ENCODE measurements at regions of chr10 and their contacts with region 1.

Region 1: GRCh38 chr10:71383972-71384687 is 12.6 kb upstream of the CDH23 start:
- DNase-seq: peak; percentile 44
- ATAC-seq: peak; percentile 98
- H3K4me3 ChIP-seq: no peak overlapping the region
- H3K27ac ChIP-seq: no peak overlapping the region
- H3K4me1 ChIP-seq: peaks cover 16% of the 10 kb centered on the region
- H3K27me3 ChIP-seq: peaks cover 0 to 3% of the 10 kb centered on the region in 2 experiments; a peak in 3 of 5 replicates
- CTCF ChIP-seq: peak; percentile 91
- EP300 ChIP-seq: no peak
- POLR2A ChIP-seq: no peak
- RAD21 ChIP-seq: peak; percentile 85

Region 2: GRCh38 chr10:71191531-71192076 is 192.5 kb before region 1 on chr10:
- CTCF ChIA-PET with region 1: no interaction called
- POLR2A ChIA-PET with region 1: no interaction called
- in situ Hi-C with region 1: no loop called
- intact Hi-C with region 1: no loop called
- DNase-seq: no peak
- ATAC-seq: no peak
- H3K4me3 ChIP-seq: no peak overlapping the region
- H3K27ac ChIP-seq: no peak overlapping the region
- H3K4me1 ChIP-seq: no peaks in the 10 kb centered on the region
- H3K27me3 ChIP-seq: peaks cover 4% of the 10 kb centered on the region in 2 experiments; a peak in 3 of 5 replicates
- CTCF ChIP-seq: no peak
- EP300 ChIP-seq: no peak
- POLR2A ChIP-seq: no peak
- RAD21 ChIP-seq: no peak

Region 3: GRCh38 chr10:71314028-71314693 is 70.0 kb before region 1 on chr10:
- CTCF ChIA-PET with region 1: interaction called, 7 read pairs
- POLR2A ChIA-PET with region 1: no interaction called
- in situ Hi-C with region 1: loop called (anchors 5 kb)
- intact Hi-C with region 1: loop called (anchors 2 kb)
- DNase-seq: no peak
- ATAC-seq: peak; percentile 30; the same call in 2 of the 3 replicates
- H3K4me3 ChIP-seq: no peak overlapping the region
- H3K27ac ChIP-seq: no peak overlapping the region
- H3K4me1 ChIP-seq: 0 out of 2 replicates have a peak, but pooled peaks cover 5% of the 10 kb centered on the region
- H3K27me3 ChIP-seq: peaks cover 1 to 15% of the 10 kb centered on the region in 2 experiments; a peak in 2 of 5 replicates
- CTCF ChIP-seq: peak; percentile 75
- EP300 ChIP-seq: no peak
- POLR2A ChIP-seq: no peak
- RAD21 ChIP-seq: peak; percentile 57

Region 4: GRCh38 chr10:71396084-71396720 is 12.1 kb after region 1 on chr10:
- CTCF ChIA-PET with region 1: no interaction called
- POLR2A ChIA-PET with region 1: no interaction called
- in situ Hi-C with region 1: no loop called
- intact Hi-C with region 1: no loop called
- DNase-seq: no peak
- ATAC-seq: no peak
- H3K4me3 ChIP-seq: no peak overlapping the region
- H3K27ac ChIP-seq: no peak overlapping the region
- H3K4me1 ChIP-seq: peaks cover 17% of the 10 kb centered on the region
- H3K27me3 ChIP-seq: peaks cover 9 to 52% of the 10 kb centered on the region in 2 experiments; a peak in 3 of 5 replicates
- CTCF ChIP-seq: 0 out of 2 replicates have a peak, but pooled peaks have one; percentile 7
- EP300 ChIP-seq: no peak
- POLR2A ChIP-seq: no peak
- RAD21 ChIP-seq: no peak

Region 5: DNA sequence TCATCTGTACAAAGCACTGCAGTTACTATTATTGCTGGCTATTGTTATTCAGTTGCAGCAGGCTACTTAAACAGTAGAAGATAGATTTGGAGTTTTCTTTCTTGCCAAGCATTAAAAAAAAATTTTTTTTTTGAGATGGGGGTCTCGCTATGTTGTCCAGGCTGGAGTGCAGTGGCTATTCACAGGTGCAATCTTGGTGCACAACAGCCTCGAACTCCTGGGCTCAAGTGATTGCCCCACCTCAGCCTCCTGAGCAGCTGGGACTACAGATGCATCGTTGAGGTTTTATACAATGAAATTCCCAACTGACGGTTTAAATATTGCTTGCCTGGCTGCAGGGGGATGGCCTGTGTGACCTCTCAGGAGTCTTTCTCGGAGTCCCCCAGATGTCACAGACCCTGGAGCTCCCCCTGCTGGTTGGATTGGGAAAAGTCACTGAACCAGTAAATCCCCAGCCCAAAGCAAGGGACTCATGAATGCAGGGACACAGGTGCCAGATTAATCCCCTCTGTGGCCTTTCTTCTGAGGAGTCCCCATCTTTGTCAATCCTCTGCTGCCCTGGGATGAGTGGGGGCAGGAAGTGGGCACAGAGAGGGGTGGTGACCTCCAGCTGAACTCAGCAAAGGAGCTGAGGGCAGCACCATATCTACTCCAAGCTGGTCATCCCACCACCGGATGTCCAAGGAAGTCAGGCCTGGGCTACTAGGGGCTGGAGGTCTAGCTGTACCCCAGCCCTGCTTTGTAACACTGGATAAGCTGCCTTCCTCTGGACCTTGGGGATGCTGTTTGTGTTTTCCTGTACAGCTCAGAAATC is 185.9 kb after region 1 on chr10:
- CTCF ChIA-PET with region 1: interaction called, 18 read pairs
- POLR2A ChIA-PET with region 1: no interaction called
- in situ Hi-C with region 1: loop called (anchors 10 kb)
- intact Hi-C with region 1: loop called (anchors 1 kb)
- DNase-seq: peak; percentile 53
- ATAC-seq: peak; percentile 75
- H3K4me3 ChIP-seq: no peak overlapping the region
- H3K27ac ChIP-seq: no peak overlapping the region
- H3K4me1 ChIP-seq: no peaks in the 10 kb centered on the region
- H3K27me3 ChIP-seq: peaks cover 3 to 27% of the 10 kb centered on the region in 2 experiments; a peak in 3 of 5 replicates
- CTCF ChIP-seq: peak; percentile 82
- EP300 ChIP-seq: no peak
- POLR2A ChIP-seq: no peak
- RAD21 ChIP-seq: peak; percentile 70

Region 6: GRCh38 chr10:71708301-71708703 is 324.2 kb after region 1 on chr10:
- CTCF ChIA-PET with region 1: no interaction called
- POLR2A ChIA-PET with region 1: no interaction called
- in situ Hi-C with region 1: no loop called
- intact Hi-C with region 1: loop called (anchors 5 kb)
- DNase-seq: peak; percentile 21
- ATAC-seq: peak; percentile 79
- H3K4me3 ChIP-seq: no peak overlapping the region
- H3K27ac ChIP-seq: no peak overlapping the region
- H3K4me1 ChIP-seq: no peaks in the 10 kb centered on the region
- H3K27me3 ChIP-seq: peaks cover 3 to 35% of the 10 kb centered on the region in 2 experiments; a peak in 4 of 5 replicates
- CTCF ChIP-seq: peak; percentile 90
- EP300 ChIP-seq: no peak
- POLR2A ChIP-seq: no peak
- RAD21 ChIP-seq: peak; percentile 82

Measured in HepG2 (cell line).